Caco-2 (cell line): ENCODE measurements at regions of chr16 and their contacts with region 1.

Region 1: GRCh38 chr16:53773150-53773846 is 69.3 kb downstream of the FTO start:
- DNase-seq: peak; percentile 71 to 77
- H3K4me3 ChIP-seq: no peak overlapping the region
- H3K4me3 Mint-ChIP-seq: no peak overlapping the region
- H3K27ac Mint-ChIP-seq: no peak overlapping the region
- H3K4me1 ChIP-seq: peaks cover 74% of the 10 kb centered on the region
- H3K4me1 Mint-ChIP-seq: peaks cover 26% of the 10 kb centered on the region
- H3K27me3 ChIP-seq: no peaks in the 10 kb centered on the region
- H3K27me3 Mint-ChIP-seq: no peaks in the 10 kb centered on the region
- CTCF ChIP-seq: peak; percentile 76 to 87

Region 2: GRCh38 chr16:53714205-53715022 is 58.9 kb before region 1 on chr16:
- CTCF ChIA-PET with region 1: no interaction called
- POLR2A ChIA-PET with region 1: no interaction called
- intact Hi-C with region 1: no loop called
- DNase-seq: no peak
- H3K4me3 ChIP-seq: no peak overlapping the region
- H3K4me3 Mint-ChIP-seq: no peak overlapping the region
- H3K27ac Mint-ChIP-seq: no peak overlapping the region
- H3K4me1 ChIP-seq: 0 out of 2 replicates have a peak, but pooled peaks cover 4% of the 10 kb centered on the region
- H3K4me1 Mint-ChIP-seq: peaks cover 6% of the 10 kb centered on the region
- H3K27me3 ChIP-seq: no peaks in the 10 kb centered on the region
- H3K27me3 Mint-ChIP-seq: no peaks in the 10 kb centered on the region
- CTCF ChIP-seq: no peak

Region 3: GRCh38 chr16:53743149-53743566 is 30.1 kb before region 1 on chr16:
- CTCF ChIA-PET with region 1: interaction called, 4 read pairs
- POLR2A ChIA-PET with region 1: no interaction called
- intact Hi-C with region 1: loop called (anchors 2 kb)
- DNase-seq: peak in 1 of 2 experiments; percentile 52
- H3K4me3 ChIP-seq: no peak overlapping the region
- H3K4me3 Mint-ChIP-seq: no peak overlapping the region
- H3K27ac Mint-ChIP-seq: no peak overlapping the region
- H3K4me1 ChIP-seq: peaks cover 19% of the 10 kb centered on the region
- H3K4me1 Mint-ChIP-seq: peaks cover 31% of the 10 kb centered on the region
- H3K27me3 ChIP-seq: no peaks in the 10 kb centered on the region
- H3K27me3 Mint-ChIP-seq: no peaks in the 10 kb centered on the region
- CTCF ChIP-seq: peak; percentile 75 to 78

Region 4: GRCh38 chr16:53881371-53881770 is 108.1 kb after region 1 on chr16:
- CTCF ChIA-PET with region 1: interaction called, 4 read pairs
- POLR2A ChIA-PET with region 1: no interaction called
- intact Hi-C with region 1: loop called (anchors 1 kb)
- DNase-seq: peak; percentile 77 to 91
- H3K4me3 ChIP-seq: no peak overlapping the region
- H3K4me3 Mint-ChIP-seq: no peak overlapping the region
- H3K27ac Mint-ChIP-seq: peak overlapping the region; percentile 84
- H3K4me1 ChIP-seq: peaks cover 37% of the 10 kb centered on the region
- H3K4me1 Mint-ChIP-seq: peaks cover 27% of the 10 kb centered on the region
- H3K27me3 ChIP-seq: no peaks in the 10 kb centered on the region
- H3K27me3 Mint-ChIP-seq: no peaks in the 10 kb centered on the region
- CTCF ChIP-seq: no peak

Region 5: DNA sequence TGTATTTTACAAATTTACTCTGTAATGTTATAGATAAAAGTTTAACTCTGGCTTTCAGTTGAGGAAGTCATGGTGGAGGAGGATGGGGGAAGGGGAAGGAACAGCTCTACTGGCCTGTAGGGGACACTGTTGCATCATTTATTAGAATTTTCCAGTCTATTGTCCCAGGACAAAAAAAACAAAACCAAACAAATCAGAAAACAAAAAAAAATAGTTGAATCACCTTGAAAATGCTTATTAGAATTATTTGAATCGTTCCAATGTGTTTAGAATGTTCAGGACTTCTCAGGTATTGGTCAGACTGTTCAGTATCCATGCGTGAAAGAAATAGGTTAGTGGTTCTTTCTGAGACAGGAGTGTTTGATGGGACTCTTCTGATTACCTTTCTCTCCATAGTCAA is 172.7 kb after region 1 on chr16:
- CTCF ChIA-PET with region 1: no interaction called
- POLR2A ChIA-PET with region 1: no interaction called
- intact Hi-C with region 1: loop called (anchors 1 kb)
- DNase-seq: peak in 1 of 2 experiments; percentile 65
- H3K4me3 ChIP-seq: no peak overlapping the region
- H3K4me3 Mint-ChIP-seq: no peak overlapping the region
- H3K27ac Mint-ChIP-seq: no peak overlapping the region
- H3K4me1 ChIP-seq: peaks cover 14% of the 10 kb centered on the region
- H3K4me1 Mint-ChIP-seq: peaks cover 7% of the 10 kb centered on the region
- H3K27me3 ChIP-seq: no peaks in the 10 kb centered on the region
- H3K27me3 Mint-ChIP-seq: no peaks in the 10 kb centered on the region
- CTCF ChIP-seq: peak; percentile 69 to 87

Region 6: GRCh38 chr16:54180421-54181359 is 407.4 kb after region 1 on chr16:
- CTCF ChIA-PET with region 1: no interaction called
- POLR2A ChIA-PET with region 1: no interaction called
- intact Hi-C with region 1: loop called (anchors 2 kb)
- DNase-seq: peak; percentile 66 to 80
- H3K4me3 ChIP-seq: no peak overlapping the region
- H3K4me3 Mint-ChIP-seq: peak overlapping the region; percentile 55
- H3K27ac Mint-ChIP-seq: peak overlapping the region; percentile 85
- H3K4me1 ChIP-seq: peaks cover 66% of the 10 kb centered on the region
- H3K4me1 Mint-ChIP-seq: peaks cover 64% of the 10 kb centered on the region
- H3K27me3 ChIP-seq: no peaks in the 10 kb centered on the region
- H3K27me3 Mint-ChIP-seq: no peaks in the 10 kb centered on the region
- CTCF ChIP-seq: no peak

Region 7: DNA sequence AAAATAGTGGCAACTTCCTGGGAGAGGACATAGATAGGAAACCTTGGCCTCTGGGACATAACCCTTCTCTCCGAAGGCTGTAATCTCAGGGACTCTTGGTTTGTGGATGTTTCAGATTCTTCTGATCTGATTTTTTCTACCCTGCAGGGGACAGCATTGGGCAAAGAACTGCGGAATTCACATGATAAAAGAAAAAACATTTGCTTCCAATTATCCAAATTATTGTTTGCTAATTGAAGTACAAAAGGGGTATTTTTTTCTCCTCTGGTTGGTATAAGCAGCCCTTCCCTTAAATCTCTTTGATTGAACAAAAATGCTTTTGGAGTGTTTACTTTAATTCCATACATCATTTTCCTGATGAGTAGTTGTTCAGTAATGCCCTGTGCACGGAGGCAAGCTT is 765.0 kb after region 1 on chr16:
- CTCF ChIA-PET with region 1: no interaction called
- POLR2A ChIA-PET with region 1: no interaction called
- intact Hi-C with region 1: loop called (anchors 5 kb)
- DNase-seq: peak in 1 of 2 experiments; percentile 31
- H3K4me3 ChIP-seq: no peak overlapping the region
- H3K4me3 Mint-ChIP-seq: no peak overlapping the region
- H3K27ac Mint-ChIP-seq: no peak overlapping the region
- H3K4me1 ChIP-seq: peaks cover 23% of the 10 kb centered on the region
- H3K4me1 Mint-ChIP-seq: peaks cover 8% of the 10 kb centered on the region
- H3K27me3 ChIP-seq: no peaks in the 10 kb centered on the region
- H3K27me3 Mint-ChIP-seq: no peaks in the 10 kb centered on the region
- CTCF ChIP-seq: peak; percentile 41 to 61

Region 8: DNA sequence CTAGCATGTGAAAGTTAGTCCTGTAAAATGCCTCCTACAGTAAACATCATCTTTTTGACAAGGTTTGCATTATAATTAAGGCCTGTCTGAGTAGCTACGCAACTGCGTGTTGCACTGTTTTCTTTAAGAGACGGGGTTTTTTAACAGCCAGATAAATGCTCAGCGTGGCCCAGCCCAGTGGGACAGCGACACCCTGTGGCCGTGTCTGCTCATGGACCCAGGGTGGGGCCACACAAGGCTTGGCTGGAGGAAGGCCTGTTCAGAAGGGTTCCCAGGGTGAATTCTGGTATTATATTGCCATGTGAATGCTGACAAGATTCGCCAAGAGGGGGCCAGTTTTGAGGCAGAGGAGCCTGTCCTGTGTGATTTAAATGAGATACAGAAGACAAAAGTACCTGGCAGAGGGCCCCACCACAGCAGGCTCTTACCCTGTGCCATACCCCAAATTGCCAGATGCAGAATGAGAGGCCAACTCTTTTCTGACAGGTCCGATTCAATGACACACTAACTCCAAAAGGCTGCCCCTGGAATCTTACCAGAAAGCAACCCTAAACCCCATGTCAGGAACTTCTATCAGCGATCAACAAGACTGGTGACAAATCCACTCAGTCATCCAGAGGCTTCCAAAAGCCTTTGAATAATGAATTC is 1484.8 kb after region 1 on chr16:
- CTCF ChIA-PET with region 1: no interaction called
- POLR2A ChIA-PET with region 1: no interaction called
- intact Hi-C with region 1: loop called (anchors 5 kb)
- DNase-seq: peak; percentile 65 to 86
- H3K4me3 ChIP-seq: no peak overlapping the region
- H3K4me3 Mint-ChIP-seq: no peak overlapping the region
- H3K27ac Mint-ChIP-seq: no peak overlapping the region
- H3K4me1 ChIP-seq: no peaks in the 10 kb centered on the region
- H3K4me1 Mint-ChIP-seq: peaks cover 6% of the 10 kb centered on the region
- H3K27me3 ChIP-seq: no peaks in the 10 kb centered on the region
- H3K27me3 Mint-ChIP-seq: no peaks in the 10 kb centered on the region
- CTCF ChIP-seq: peak; percentile 86 to 93